Psoas muscle (tissue), 8 donors: ENCODE measurements at regions of chr10 and their contacts with region 1.

Region 1: GRCh38 chr10:6114805-6115341 is 26.0 kb downstream of the RBM17 start:
- DNase-seq: peak in 1 of 2 donors; percentile 54
- ATAC-seq: peak; percentile 36 to 59 (median 46)
- H3K4me3 ChIP-seq: no peak overlapping the region
- H3K27ac ChIP-seq: peak overlapping the region; percentile 58
- H3K4me1 ChIP-seq: peaks cover 41% of the 10 kb centered on the region
- H3K27me3 ChIP-seq: no peaks in the 10 kb centered on the region
- CTCF ChIP-seq: no peak

Region 2: GRCh38 chr10:5525561-5526341 is 589.1 kb before region 1 on chr10:
- intact Hi-C with region 1: no loop called
- DNase-seq: peak in 1 of 2 donors; percentile 44
- ATAC-seq: no peak
- H3K4me3 ChIP-seq: no peak overlapping the region
- H3K27ac ChIP-seq: no peak overlapping the region
- H3K4me1 ChIP-seq: no peaks in the 10 kb centered on the region
- H3K27me3 ChIP-seq: no peaks in the 10 kb centered on the region
- CTCF ChIP-seq: no peak

Region 3: DNA sequence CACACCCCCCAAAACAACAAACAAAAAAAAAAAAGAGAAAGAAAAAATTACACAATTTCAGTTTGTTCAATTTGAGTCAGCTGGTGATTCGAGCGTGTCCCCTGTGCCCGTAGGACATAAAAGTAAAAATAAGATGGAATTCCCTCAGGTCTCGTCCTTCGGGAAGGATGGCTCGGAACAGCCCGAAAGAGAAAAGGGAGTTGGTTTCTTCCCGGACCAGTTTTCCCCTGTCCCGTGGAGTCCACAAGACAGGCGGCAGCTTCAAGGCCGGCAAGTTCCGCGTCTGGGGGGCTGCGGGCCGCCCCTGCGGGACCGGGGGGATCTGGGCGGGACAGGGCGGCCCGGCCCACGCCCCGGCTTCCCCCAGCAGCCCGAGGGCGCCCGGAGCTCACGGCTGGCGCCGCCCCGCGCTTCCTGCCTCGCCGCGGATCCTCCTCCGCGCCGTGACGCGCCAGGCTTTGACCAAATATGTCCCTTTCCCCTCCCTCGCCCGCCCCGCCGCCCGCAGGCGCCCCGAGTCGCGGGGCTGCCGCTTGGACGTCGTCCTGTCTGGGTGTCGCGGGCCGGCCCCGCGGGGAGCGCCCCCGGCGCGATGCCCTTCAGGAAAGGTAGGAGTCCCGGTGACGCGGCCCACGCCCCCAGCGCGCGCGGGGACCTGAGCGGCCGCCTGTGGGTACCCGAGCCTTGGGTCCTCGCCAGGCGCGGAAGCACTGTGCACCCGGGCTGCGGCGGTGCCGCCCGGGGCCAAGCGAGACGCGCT is 29.7 kb after region 1 on chr10:
- intact Hi-C with region 1: loop called in 1 of 2 experiments (anchors 5 kb)
- DNase-seq: peak; percentile 92 to 94
- ATAC-seq: peak; percentile 70 to 78 (median 76)
- H3K4me3 ChIP-seq: peak overlapping the region; percentile 99
- H3K27ac ChIP-seq: peak overlapping the region; percentile 96
- H3K4me1 ChIP-seq: peaks cover 49% of the 10 kb centered on the region
- H3K27me3 ChIP-seq: no peaks in the 10 kb centered on the region
- CTCF ChIP-seq: no peak

Region 4: GRCh38 chr10:6218692-6219493 is 104.0 kb after region 1 on chr10:
- intact Hi-C with region 1: loop called in 1 of 2 experiments (anchors 5 kb)
- DNase-seq: peak in 1 of 2 donors; percentile 66
- ATAC-seq: peak; percentile 7 to 53 (median 31)
- H3K4me3 ChIP-seq: no peak overlapping the region
- H3K27ac ChIP-seq: peak overlapping the region; percentile 61
- H3K4me1 ChIP-seq: no peaks in the 10 kb centered on the region
- H3K27me3 ChIP-seq: no peaks in the 10 kb centered on the region
- CTCF ChIP-seq: no peak